Activated CD8-positive, alpha-beta T cell treated with anti-CD3 and anti-CD28 coated beads for 36 hours (primary cell): ENCODE measurements at regions of chrX and their contacts with region 1.

Region 1: DNA sequence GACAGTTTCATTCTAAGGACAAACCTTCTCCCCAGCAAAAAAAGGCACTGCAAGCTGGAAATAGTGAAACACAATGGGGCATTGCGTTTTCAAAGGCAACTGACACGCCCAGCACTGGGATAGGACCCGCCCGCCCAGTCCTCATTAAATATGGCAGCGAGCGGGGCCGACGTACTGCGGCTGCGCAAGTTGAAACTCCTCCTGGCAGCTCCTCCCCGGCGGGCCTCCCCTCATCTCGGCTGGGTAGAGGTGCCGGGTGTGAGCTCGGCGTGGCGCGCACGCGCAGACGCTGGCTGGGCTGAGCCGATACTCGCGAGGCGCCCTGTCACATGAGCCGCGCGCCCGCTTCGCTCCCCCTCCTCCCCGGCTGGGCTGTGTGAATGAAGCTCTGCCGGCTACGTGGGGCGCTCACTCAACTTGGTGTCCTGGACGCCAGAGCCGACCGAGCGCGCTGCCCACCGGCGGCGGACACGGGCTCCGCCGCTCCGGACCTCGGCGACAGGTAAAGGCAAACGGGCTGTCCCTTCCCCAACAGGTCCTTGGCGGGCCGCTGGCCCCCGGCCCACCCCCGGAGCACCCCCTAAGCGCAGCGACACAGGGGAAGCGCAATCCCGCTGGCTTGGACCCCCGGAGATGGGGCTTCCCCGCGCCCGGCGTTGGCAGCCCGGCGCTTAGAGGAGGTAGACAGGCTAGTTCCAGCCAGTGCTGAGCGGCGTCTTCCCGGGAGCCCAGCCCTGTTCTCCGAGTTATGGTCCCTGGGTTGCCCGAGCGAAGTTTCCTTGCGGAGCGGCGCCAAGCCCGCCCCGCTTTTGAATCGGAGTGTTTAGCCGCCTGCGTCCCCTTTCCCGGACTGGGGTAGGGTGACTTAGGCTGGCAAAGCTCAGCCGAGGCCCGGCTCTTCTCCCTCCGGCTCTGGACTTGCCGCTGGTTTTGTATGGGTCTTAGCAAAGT is at the start of gene CLCN5:
- DNase-seq: peak; percentile 96
- ATAC-seq: peak; percentile 97
- H3K4me3 Mint-ChIP-seq: peak within 1 kb of the TSS; percentile 74
- H3K27ac Mint-ChIP-seq: peak within 1 kb of the TSS; percentile 68
- H3K4me1 Mint-ChIP-seq: peaks cover 7% of the 10 kb centered on the region
- H3K27me3 Mint-ChIP-seq: no peaks in the 10 kb centered on the region
- CTCF ChIP-seq: no peak
- total RNA-seq, gene CLCN5: 1.7 TPM

Region 2: DNA sequence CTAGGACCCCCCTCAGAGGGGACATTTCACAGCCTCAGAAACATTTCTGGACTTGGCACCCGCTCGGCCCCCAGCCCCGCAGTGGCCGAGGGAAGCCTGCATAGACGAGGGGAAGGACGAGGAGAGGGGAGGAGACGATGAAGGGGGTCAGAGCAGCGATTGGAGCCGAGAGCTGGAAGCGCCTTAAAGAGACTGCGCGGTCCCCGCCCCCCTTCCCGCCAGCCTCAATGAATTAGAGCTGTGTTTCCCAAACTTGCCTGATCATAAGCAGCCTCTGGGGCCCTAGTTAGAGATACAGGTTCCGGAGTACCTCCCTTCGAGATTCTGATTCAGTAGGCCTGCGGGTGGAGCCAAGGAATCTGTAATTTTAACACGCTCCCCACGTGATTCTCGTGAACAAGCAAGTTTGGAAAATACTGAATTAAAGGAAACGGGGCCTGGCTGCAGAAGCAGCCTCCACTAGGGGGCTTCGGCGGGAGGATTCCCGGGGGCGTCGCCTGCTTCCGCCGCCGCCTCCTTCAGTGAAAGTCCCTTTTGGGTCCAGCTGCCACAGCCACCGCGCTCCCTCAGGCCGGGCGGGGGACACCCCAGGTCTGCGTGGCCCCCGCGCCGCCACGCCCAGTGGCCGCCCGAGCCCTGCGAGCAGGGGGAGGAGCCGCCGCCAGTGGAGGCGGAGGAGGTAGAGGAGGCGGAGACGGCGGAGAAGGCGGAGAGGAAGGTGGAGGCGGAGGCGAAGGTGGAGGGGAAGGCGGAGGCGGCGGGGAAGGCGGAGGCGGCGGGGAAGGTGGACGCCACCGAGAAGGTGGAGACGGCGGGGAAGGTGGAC is 43.5 kb before region 1 on chrX and contains the start of gene USP27X:
- CTCF ChIA-PET with region 1: interaction called, 57 read pairs
- POLR2A ChIA-PET with region 1: no interaction called
- intact Hi-C with region 1: loop called (anchors 5 kb)
- DNase-seq: peak; percentile 76
- ATAC-seq: peak; percentile 90
- H3K4me3 Mint-ChIP-seq: peak within 1 kb of the TSS; percentile 69
- H3K27ac Mint-ChIP-seq: peak within 1 kb of the TSS; percentile 70
- H3K4me1 Mint-ChIP-seq: peaks cover 25% of the 10 kb centered on the region
- H3K27me3 Mint-ChIP-seq: no peaks in the 10 kb centered on the region
- CTCF ChIP-seq: peak; percentile 34
- total RNA-seq, gene USP27X: 1.0 to 1.3 TPM

Region 3: DNA sequence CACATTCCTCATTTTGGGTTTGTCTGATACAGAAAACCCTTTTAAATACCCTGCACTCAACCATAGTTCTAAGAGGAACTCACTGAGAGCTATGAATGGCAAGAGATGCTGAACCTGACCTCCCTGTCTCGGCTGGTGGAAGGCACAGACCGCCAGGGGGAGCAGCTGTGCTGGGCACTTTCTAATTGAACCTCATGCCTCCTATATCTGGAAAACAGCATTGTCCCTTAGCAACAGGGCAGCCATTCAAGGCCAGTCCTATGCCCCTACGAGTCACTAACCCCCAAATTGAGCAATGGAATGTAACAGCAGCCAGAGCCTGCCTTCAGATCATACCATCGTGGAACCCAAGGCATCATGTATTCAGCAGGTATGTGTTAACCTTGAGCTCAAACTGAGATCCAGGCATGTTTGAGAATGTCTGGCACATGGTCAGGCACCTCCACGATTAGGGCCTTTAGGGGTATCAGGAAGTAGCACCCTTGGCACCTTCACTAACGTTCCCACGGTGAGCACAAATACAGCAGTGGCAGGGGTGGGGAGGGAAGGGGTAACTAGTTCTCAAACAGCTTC is 38.2 kb before region 1 on chrX:
- CTCF ChIA-PET with region 1: interaction called, 57 read pairs
- POLR2A ChIA-PET with region 1: no interaction called
- intact Hi-C with region 1: loop called (anchors 5 kb)
- DNase-seq: peak; percentile 77
- ATAC-seq: peak; percentile 73
- H3K4me3 Mint-ChIP-seq: no peak overlapping the region
- H3K27ac Mint-ChIP-seq: no peak overlapping the region
- H3K4me1 Mint-ChIP-seq: peaks cover 17% of the 10 kb centered on the region
- H3K27me3 Mint-ChIP-seq: no peaks in the 10 kb centered on the region
- CTCF ChIP-seq: peak; percentile 43

Region 4: DNA sequence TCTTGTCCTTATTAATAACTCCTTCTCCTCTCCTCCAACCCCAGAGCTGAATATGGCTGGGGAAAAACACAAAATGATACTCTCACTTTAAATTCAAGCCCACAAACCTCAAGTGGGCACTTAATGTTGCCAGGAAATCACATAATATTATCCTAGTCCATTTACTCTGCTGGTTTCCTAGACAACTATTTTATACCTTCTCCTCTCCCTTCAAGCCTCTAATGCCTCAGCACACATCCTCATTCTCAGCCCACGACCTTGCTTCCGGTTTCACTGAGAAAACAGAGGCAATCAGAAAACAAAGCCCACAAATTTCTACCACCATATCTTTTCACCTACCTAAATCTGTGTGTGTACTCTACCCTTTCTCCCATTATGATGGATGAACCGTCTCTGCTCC is 12.2 kb before region 1 on chrX:
- CTCF ChIA-PET with region 1: interaction called, 16 read pairs
- POLR2A ChIA-PET with region 1: no interaction called
- intact Hi-C with region 1: no loop called
- DNase-seq: peak; percentile 37
- ATAC-seq: peak; percentile 56
- H3K4me3 Mint-ChIP-seq: no peak overlapping the region
- H3K27ac Mint-ChIP-seq: peak overlapping the region; percentile 14
- H3K4me1 Mint-ChIP-seq: peaks cover 16% of the 10 kb centered on the region
- H3K27me3 Mint-ChIP-seq: no peaks in the 10 kb centered on the region
- CTCF ChIP-seq: no peak